ENCODE measurements at regions of chrX and their contacts with region 1.

Region 1: GRCh38 chrX:72018277-72019112 is 107.8 kb downstream of the NHSL2 start:
- DNase-seq: peak; percentile 55 to 91 (median 81)
- ATAC-seq: peak; percentile 97
- H3K4me3 ChIP-seq: no peak overlapping the region
- H3K4me3 Mint-ChIP-seq: peak overlapping the region; percentile 37
- H3K27ac ChIP-seq: no peak overlapping the region
- H3K27ac Mint-ChIP-seq: no peak overlapping the region
- H3K4me1 ChIP-seq: peaks cover 11% of the 10 kb centered on the region
- H3K4me1 Mint-ChIP-seq: peaks cover 6% of the 10 kb centered on the region
- H3K27me3 ChIP-seq: no peaks in the 10 kb centered on the region
- H3K27me3 Mint-ChIP-seq: peaks cover 14% of the 10 kb centered on the region
- CTCF ChIP-seq: peak; percentile 58

Region 2: GRCh38 chrX:71998836-71999509 is 19.5 kb before region 1 on chrX:
- CTCF ChIA-PET with region 1: interaction called, 19 read pairs
- POLR2A ChIA-PET with region 1: no interaction called
- intact Hi-C with region 1: no loop called
- DNase-seq: peak in 7 of 9 experiments; percentile 14 to 60 (median 49)
- ATAC-seq: peak; percentile 55
- H3K4me3 ChIP-seq: no peak overlapping the region
- H3K4me3 Mint-ChIP-seq: no peak overlapping the region
- H3K27ac ChIP-seq: no peak overlapping the region
- H3K27ac Mint-ChIP-seq: no peak overlapping the region
- H3K4me1 ChIP-seq: no peaks in the 10 kb centered on the region
- H3K4me1 Mint-ChIP-seq: peaks cover 7% of the 10 kb centered on the region
- H3K27me3 ChIP-seq: no peaks in the 10 kb centered on the region
- H3K27me3 Mint-ChIP-seq: peaks cover 5% of the 10 kb centered on the region
- CTCF ChIP-seq: peak; percentile 59

Region 3: GRCh38 chrX:72003811-72004750 is 14.4 kb before region 1 on chrX:
- CTCF ChIA-PET with region 1: interaction called, 19 read pairs
- POLR2A ChIA-PET with region 1: no interaction called
- intact Hi-C with region 1: no loop called
- DNase-seq: peak in 1 of 9 experiments; percentile 17
- ATAC-seq: no peak
- H3K4me3 ChIP-seq: no peak overlapping the region
- H3K4me3 Mint-ChIP-seq: no peak overlapping the region
- H3K27ac ChIP-seq: no peak overlapping the region
- H3K27ac Mint-ChIP-seq: no peak overlapping the region
- H3K4me1 ChIP-seq: no peaks in the 10 kb centered on the region
- H3K4me1 Mint-ChIP-seq: no peaks in the 10 kb centered on the region
- H3K27me3 ChIP-seq: no peaks in the 10 kb centered on the region
- H3K27me3 Mint-ChIP-seq: peaks cover 10% of the 10 kb centered on the region
- CTCF ChIP-seq: no peak

Region 4: DNA sequence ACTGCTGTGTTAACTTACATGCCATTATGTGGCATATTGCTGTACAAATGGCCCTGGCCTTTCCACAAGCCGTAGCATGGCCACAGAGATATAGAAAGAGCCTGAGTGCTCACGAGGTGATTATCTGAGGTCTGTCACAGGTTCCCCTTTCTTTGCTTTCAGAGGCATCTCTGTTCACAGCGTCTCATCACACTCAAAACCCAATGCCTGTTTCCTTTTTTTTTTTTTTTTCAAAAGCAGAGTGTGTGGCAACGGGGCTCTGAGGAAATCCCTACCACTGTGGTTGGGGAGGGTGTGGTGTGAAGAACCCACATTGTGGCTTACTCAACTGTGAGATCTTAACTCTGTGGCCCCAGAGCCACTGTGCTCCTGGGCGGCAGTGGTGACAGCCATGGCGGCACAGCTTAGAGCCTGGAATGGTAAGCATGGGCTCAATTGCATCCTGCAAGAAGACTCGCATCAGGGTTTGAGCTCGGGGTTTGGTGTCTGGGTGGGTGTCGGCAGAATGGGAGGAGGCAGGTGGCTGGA is 82.4 kb after region 1 on chrX:
- CTCF ChIA-PET with region 1: interaction called, 6 read pairs
- POLR2A ChIA-PET with region 1: no interaction called
- intact Hi-C with region 1: loop called in 1 of 2 experiments (anchors 5 kb)
- DNase-seq: peak; percentile 44 to 92 (median 72)
- ATAC-seq: peak; percentile 66
- H3K4me3 ChIP-seq: peak overlapping the region in 1 of 2 experiments; percentile 55
- H3K4me3 Mint-ChIP-seq: peak overlapping the region; percentile 79
- H3K27ac ChIP-seq: peak overlapping the region in 1 of 2 experiments; percentile 71
- H3K27ac Mint-ChIP-seq: peak overlapping the region; percentile 79
- H3K4me1 ChIP-seq: peaks cover 40% of the 10 kb centered on the region
- H3K4me1 Mint-ChIP-seq: peaks cover 43% of the 10 kb centered on the region
- H3K27me3 ChIP-seq: no peaks in the 10 kb centered on the region
- H3K27me3 Mint-ChIP-seq: peaks cover 16% of the 10 kb centered on the region
- CTCF ChIP-seq: no peak

Region 5: DNA sequence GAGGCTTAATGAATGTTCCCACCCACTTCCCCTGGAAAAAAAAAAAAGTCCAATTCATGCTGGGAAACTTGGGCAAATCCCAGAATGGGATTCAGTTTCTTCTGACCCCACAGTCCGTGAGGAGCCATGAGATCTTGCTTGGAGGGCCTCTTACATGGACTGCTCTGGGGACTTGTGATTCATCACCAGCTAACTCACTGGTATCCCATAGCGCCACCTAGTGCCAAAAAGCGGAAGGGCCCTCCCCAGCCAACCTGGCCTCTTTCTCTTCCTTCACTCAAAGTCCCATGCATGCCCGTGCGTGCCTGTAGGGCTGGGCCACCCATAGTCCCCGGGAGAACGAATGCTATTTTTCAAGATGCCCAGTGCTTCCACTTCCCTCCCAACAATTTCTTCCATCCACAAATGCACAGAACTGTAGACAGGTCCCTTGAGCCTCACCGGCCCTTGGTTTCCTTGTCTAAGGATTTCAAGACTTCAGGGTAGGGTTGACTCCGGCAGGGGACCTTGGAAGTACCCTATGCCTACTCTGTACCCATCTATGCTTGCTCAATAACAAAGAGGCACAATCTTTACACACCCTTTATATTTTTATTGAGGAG is 108.1 kb after region 1 on chrX:
- CTCF ChIA-PET with region 1: interaction called, 98 read pairs
- POLR2A ChIA-PET with region 1: interaction called, 3 read pairs
- intact Hi-C with region 1: loop called (anchors 1 kb)
- DNase-seq: peak; percentile 64 to 91 (median 81)
- ATAC-seq: peak; percentile 76
- H3K4me3 ChIP-seq: no peak overlapping the region
- H3K4me3 Mint-ChIP-seq: no peak overlapping the region
- H3K27ac ChIP-seq: no peak overlapping the region
- H3K27ac Mint-ChIP-seq: no peak overlapping the region
- H3K4me1 ChIP-seq: peaks cover 5% of the 10 kb centered on the region
- H3K4me1 Mint-ChIP-seq: peaks cover 25% of the 10 kb centered on the region
- H3K27me3 ChIP-seq: no peaks in the 10 kb centered on the region
- H3K27me3 Mint-ChIP-seq: peaks cover 13% of the 10 kb centered on the region
- CTCF ChIP-seq: peak; percentile 43

Region 6: GRCh38 chrX:72181178-72182125 is 163.0 kb after region 1 on chrX and contains the start of gene PIN4:
- CTCF ChIA-PET with region 1: no interaction called
- POLR2A ChIA-PET with region 1: no interaction called
- intact Hi-C with region 1: loop called (anchors 1 to 5 kb)
- DNase-seq: peak; percentile 65 to 94 (median 82)
- ATAC-seq: peak; percentile 87
- H3K4me3 ChIP-seq: peak within 1 kb of the TSS; percentile 70 to 83
- H3K4me3 Mint-ChIP-seq: no peak within 1 kb of the TSS
- H3K27ac ChIP-seq: peak within 1 kb of the TSS; percentile 57 to 63
- H3K27ac Mint-ChIP-seq: peak within 1 kb of the TSS; percentile 13
- H3K4me1 ChIP-seq: peaks cover 25% of the 10 kb centered on the region
- H3K4me1 Mint-ChIP-seq: peaks cover 14% of the 10 kb centered on the region
- H3K27me3 ChIP-seq: no peaks in the 10 kb centered on the region
- H3K27me3 Mint-ChIP-seq: no peaks in the 10 kb centered on the region
- CTCF ChIP-seq: no peak
- total RNA-seq, gene PIN4: 0.35 to 1.1 TPM

Region 7: GRCh38 chrX:73214426-73215094 is 1196.1 kb after region 1 on chrX and contains the start of gene NAP1L2:
- CTCF ChIA-PET with region 1: no interaction called
- POLR2A ChIA-PET with region 1: no interaction called
- intact Hi-C with region 1: loop called in 1 of 2 experiments (anchors 10 kb)
- DNase-seq: peak in 8 of 9 experiments; percentile 6 to 81 (median 42)
- ATAC-seq: peak; percentile 87
- H3K4me3 ChIP-seq: peak within 1 kb of the TSS; percentile 55
- H3K4me3 Mint-ChIP-seq: peak within 1 kb of the TSS; percentile 91
- H3K27ac ChIP-seq: peak within 1 kb of the TSS; percentile 74 to 76
- H3K27ac Mint-ChIP-seq: peak within 1 kb of the TSS; percentile 91
- H3K4me1 ChIP-seq: peaks cover 13% of the 10 kb centered on the region
- H3K4me1 Mint-ChIP-seq: peaks cover 14% of the 10 kb centered on the region
- H3K27me3 ChIP-seq: no peaks in the 10 kb centered on the region
- H3K27me3 Mint-ChIP-seq: peaks cover 3% of the 10 kb centered on the region
- CTCF ChIP-seq: no peak
- total RNA-seq, gene NAP1L2: 2.6 to 2.7 TPM

Measured in CD8-positive, alpha-beta T cell (primary cell).